CD8-positive, alpha-beta T cell (primary cell): ENCODE measurements at regions of chr2 and their contacts with region 1.

Region 1: DNA sequence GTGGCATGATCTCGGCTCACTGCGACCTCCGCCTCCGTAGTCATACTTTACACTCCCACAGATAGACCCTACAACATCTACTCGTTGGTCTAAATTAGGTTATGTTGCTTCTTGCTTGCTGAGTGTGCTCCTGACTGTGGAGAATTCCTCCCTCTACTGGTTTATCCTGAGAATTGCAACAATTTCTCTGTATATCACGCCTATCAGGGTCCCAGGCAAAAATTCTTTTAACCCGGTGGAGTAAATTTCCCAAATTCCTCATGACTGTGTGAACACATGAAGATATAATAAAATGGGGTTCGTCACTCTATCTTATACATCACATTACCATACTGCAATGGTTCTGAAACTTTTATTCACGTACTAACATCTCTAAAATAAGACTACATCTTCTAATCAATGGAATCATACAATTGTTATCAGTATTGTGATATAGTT is 156.7 kb downstream of the EVA1A start:
- DNase-seq: peak in 2 of 9 experiments; percentile 43 to 59
- ATAC-seq: peak; percentile 78
- H3K4me3 ChIP-seq: no peak overlapping the region
- H3K4me3 Mint-ChIP-seq: no peak overlapping the region
- H3K27ac ChIP-seq: no peak overlapping the region
- H3K27ac Mint-ChIP-seq: no peak overlapping the region
- H3K4me1 ChIP-seq: no peaks in the 10 kb centered on the region
- H3K4me1 Mint-ChIP-seq: peaks cover 27% of the 10 kb centered on the region
- H3K27me3 ChIP-seq: no peaks in the 10 kb centered on the region
- H3K27me3 Mint-ChIP-seq: no peaks in the 10 kb centered on the region
- CTCF ChIP-seq: peak; percentile 87

Region 2: DNA sequence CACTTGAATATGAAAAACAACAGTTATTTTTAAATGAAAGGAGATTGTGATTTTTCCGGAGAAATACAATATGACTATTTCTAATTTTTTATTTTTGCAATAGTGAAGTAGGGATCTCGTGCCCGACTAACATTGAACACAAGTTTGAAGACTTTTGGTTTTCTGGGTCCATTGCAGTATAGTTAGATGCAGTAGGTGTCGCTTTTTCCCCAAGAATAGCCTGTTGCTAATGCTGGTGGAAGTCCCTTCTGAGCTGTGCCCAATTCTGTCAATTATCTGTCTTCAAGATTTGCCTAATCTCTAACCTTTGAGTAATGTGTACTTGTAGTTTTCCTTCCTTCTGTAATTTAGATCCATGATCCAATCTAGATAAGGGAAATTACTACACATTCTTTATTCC is 713.4 kb before region 1 on chr2:
- CTCF ChIA-PET with region 1: no interaction called
- POLR2A ChIA-PET with region 1: no interaction called
- intact Hi-C with region 1: loop called in 1 of 2 experiments (anchors 5 kb)
- DNase-seq: peak in 2 of 9 experiments; percentile 41 to 54
- ATAC-seq: peak; percentile 54
- H3K4me3 ChIP-seq: no peak overlapping the region
- H3K4me3 Mint-ChIP-seq: no peak overlapping the region
- H3K27ac ChIP-seq: no peak overlapping the region
- H3K27ac Mint-ChIP-seq: no peak overlapping the region
- H3K4me1 ChIP-seq: no peaks in the 10 kb centered on the region
- H3K4me1 Mint-ChIP-seq: no peaks in the 10 kb centered on the region
- H3K27me3 ChIP-seq: no peaks in the 10 kb centered on the region
- H3K27me3 Mint-ChIP-seq: no peaks in the 10 kb centered on the region
- CTCF ChIP-seq: peak; percentile 51

Region 3: GRCh38 chr2:74919827-74920226 is 484.2 kb before region 1 on chr2:
- CTCF ChIA-PET with region 1: interaction called, 6 read pairs
- POLR2A ChIA-PET with region 1: no interaction called
- intact Hi-C with region 1: loop called in 1 of 2 experiments (anchors 1 kb)
- DNase-seq: peak; percentile 56 to 83 (median 76)
- ATAC-seq: peak; percentile 89
- H3K4me3 ChIP-seq: peak overlapping the region in 1 of 2 experiments; percentile 25
- H3K4me3 Mint-ChIP-seq: peak overlapping the region; percentile 64
- H3K27ac ChIP-seq: no peak overlapping the region
- H3K27ac Mint-ChIP-seq: no peak overlapping the region
- H3K4me1 ChIP-seq: no peaks in the 10 kb centered on the region
- H3K4me1 Mint-ChIP-seq: peaks cover 6% of the 10 kb centered on the region
- H3K27me3 ChIP-seq: no peaks in the 10 kb centered on the region
- H3K27me3 Mint-ChIP-seq: peaks cover 13% of the 10 kb centered on the region
- CTCF ChIP-seq: peak; percentile 85

Region 4: GRCh38 chr2:75064691-75065396 is 339.2 kb before region 1 on chr2:
- CTCF ChIA-PET with region 1: no interaction called
- POLR2A ChIA-PET with region 1: no interaction called
- intact Hi-C with region 1: loop called (anchors 1 to 2 kb)
- DNase-seq: peak; percentile 18 to 63 (median 43)
- ATAC-seq: no peak
- H3K4me3 ChIP-seq: no peak overlapping the region
- H3K4me3 Mint-ChIP-seq: no peak overlapping the region
- H3K27ac ChIP-seq: no peak overlapping the region
- H3K27ac Mint-ChIP-seq: no peak overlapping the region
- H3K4me1 ChIP-seq: no peaks in the 10 kb centered on the region
- H3K4me1 Mint-ChIP-seq: no peaks in the 10 kb centered on the region
- H3K27me3 ChIP-seq: no peaks in the 10 kb centered on the region
- H3K27me3 Mint-ChIP-seq: peaks cover 2% of the 10 kb centered on the region
- CTCF ChIP-seq: peak; percentile 67

Region 5: DNA sequence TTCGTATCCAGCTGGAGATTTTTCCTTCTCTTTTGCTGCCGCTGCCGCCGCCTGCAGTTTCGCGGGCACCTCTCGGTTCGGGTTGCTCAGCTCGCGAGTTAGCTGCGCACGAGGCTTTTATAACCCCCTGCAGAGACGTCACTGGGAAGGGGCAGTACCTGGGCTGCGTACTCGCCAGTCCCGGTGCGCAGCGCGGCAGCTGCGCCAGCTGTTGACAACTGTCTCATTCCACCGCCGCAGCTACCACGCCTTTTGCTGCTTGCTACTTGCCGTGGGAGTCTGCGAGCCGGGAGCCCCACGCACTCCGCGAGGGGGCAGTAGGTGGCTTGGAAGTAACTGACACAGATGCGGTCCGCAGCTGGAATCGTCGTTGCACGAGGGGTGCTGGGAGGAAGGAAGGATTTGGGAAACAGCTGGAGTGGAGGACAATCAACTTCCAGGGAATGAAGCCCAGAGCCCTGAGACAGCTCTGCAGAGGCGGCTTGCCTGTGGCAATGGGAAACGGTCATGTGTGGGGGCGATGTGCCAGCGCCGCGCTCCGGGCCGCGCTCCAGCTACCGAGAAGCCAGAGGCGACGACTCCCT is 204.5 kb before region 1 on chr2 and contains the start of gene TACR1:
- CTCF ChIA-PET with region 1: interaction called, 3 read pairs
- POLR2A ChIA-PET with region 1: no interaction called
- intact Hi-C with region 1: loop called (anchors 5 to 10 kb)
- DNase-seq: peak in 8 of 9 experiments; percentile 5 to 64 (median 45)
- ATAC-seq: peak; percentile 89
- H3K4me3 ChIP-seq: peak within 1 kb of the TSS in 1 of 2 experiments; percentile 26
- H3K4me3 Mint-ChIP-seq: peak within 1 kb of the TSS; percentile 69
- H3K27ac ChIP-seq: no peak within 1 kb of the TSS
- H3K27ac Mint-ChIP-seq: no peak within 1 kb of the TSS
- H3K4me1 ChIP-seq: peaks cover 4% of the 10 kb centered on the region
- H3K4me1 Mint-ChIP-seq: peaks cover 14% of the 10 kb centered on the region
- H3K27me3 ChIP-seq: peaks cover 4 to 15% of the 10 kb centered on the region in 2 experiments
- H3K27me3 Mint-ChIP-seq: peaks cover 66% of the 10 kb centered on the region
- CTCF ChIP-seq: no peak
- total RNA-seq, gene TACR1: 0.05 to 0.08 TPM